Naive thymus-derived CD8-positive, alpha-beta T cell (primary cell): ENCODE measurements at regions of chr3 and their contacts with region 1.

Region 1: GRCh38 chr3:48478596-48479555 is 25.1 kb downstream of the SHISA5 start:
- DNase-seq: peak; percentile 35 to 88 (median 65)
- ATAC-seq: peak; percentile 88 to 89
- H3K4me3 Mint-ChIP-seq: peak overlapping the region; percentile 70 to 93 (median 88)
- H3K27ac Mint-ChIP-seq: peak overlapping the region; percentile 91 to 99 (median 97)
- H3K4me1 Mint-ChIP-seq: peaks cover 22 to 48% (median 43%) of the 10 kb centered on the region in 4 donors
- H3K27me3 Mint-ChIP-seq: no peaks in the 10 kb centered on the region

Region 2: GRCh38 chr3:48429317-48429959 is 49.4 kb before region 1 on chr3:
- POLR2A ChIA-PET with region 1: no interaction called
- DNase-seq: peak; percentile 31 to 82 (median 60)
- ATAC-seq: peak; percentile 73 to 80
- H3K4me3 Mint-ChIP-seq: peak overlapping the region in 9 of 10 donors; percentile 77 to 89 (median 84)
- H3K27ac Mint-ChIP-seq: peak overlapping the region in 4 of 10 donors; percentile 19 to 88 (median 68)
- H3K4me1 Mint-ChIP-seq: peaks cover 3 to 17% (median 12%) of the 10 kb centered on the region in 4 donors
- H3K27me3 Mint-ChIP-seq: peaks cover 0 to 2% (median 0%) of the 10 kb centered on the region in 5 donors

Region 3: DNA sequence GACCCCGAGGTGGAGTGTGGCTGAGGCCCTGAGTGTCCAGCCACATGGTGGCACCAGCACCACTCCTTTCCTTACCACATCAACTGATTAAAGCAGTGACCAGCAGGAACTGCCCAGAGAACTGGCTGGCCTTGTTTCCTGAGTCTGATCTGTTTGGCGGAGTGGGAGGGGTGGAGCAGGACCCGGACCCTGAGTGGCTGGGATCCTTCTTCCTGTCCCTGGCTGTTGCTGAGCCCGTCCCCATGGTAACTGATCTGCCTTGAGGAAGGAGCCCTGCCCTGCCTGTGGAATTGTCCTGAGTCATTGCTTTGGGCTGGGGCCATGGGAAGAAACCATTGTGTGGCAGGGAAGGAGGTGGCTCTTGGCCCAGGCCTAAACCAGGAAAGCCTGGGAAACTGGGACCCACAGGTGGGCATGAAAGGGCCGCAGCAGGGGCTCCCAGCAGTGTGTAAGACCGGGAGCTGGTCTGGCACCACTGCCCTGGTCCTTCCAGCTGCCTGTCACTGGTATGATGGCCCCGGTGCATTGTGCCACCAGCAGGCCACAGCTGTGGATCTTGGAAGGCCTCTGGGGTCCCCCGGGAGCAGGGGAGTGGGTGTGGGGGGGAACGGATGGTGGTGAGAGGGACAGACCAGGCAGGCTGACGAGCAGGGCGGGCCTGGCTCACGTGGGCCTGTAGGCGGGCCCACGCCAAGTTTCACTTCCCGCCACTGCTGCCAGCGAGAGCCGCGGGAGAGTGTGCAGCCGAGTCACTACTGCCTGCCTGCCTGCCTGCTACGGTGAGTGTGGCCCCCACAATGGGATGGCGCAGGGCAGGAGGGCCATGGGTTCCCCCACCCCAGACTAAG is 13.1 kb before region 1 on chr3:
- POLR2A ChIA-PET with region 1: interaction called, 33 read pairs
- DNase-seq: peak; percentile 63 to 82 (median 73)
- ATAC-seq: peak; percentile 97
- H3K4me3 Mint-ChIP-seq: peak overlapping the region; percentile 84 to 93 (median 90)
- H3K27ac Mint-ChIP-seq: peak overlapping the region; percentile 79 to 100 (median 96)
- H3K4me1 Mint-ChIP-seq: peaks cover 23 to 60% (median 59%) of the 10 kb centered on the region in 4 donors
- H3K27me3 Mint-ChIP-seq: no peaks in the 10 kb centered on the region

Region 4: DNA sequence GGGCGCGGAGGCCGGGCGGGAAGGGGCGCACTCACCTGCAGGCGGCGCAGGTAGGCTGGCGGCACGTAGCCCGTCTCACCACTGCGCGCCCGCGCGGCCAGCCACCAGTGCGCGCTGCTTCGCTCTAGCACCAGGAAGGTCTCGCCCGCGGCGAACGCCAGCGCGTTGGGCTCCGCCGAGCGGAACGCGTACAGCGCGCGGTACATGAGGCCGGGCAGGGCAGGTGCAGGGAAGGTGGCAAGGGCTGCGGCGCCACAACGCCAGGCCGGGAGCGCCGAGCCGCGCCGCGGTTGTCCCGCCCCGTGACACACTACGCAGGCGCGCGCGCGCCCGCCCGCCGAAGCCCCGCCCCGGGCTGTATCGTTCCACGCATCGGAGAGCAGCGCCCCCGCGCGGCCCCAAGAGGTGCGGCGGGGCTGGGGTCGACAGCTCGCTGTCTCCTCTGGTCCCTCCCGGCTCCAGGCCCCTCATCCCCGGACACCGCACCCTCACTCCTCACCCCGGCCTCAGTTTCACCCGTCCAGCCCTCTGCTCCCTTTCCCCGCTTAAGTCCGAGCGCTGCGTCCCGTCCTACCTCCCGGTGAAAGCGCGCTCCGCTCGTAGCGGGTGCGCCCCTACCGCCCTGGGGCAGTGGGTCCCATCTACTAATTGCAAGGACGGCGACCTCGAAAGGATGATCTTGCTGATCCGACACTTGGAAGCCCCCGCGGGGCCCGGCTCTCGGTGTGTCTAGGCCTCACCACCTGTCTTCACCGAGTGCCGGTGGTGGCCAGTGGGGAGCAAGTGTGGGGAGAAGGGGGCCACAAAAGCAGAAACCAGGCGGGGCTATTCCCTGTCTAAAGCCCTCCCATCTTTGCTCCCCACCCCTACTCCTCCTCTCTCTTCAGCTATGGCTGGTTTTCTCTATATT is 207.0 kb after region 1 on chr3 and contains the start of gene NCKIPSD:
- POLR2A ChIA-PET with region 1: no interaction called
- DNase-seq: peak; percentile 78 to 97 (median 92)
- ATAC-seq: peak; percentile 85 to 87
- H3K4me3 Mint-ChIP-seq: peak within 1 kb of the TSS; percentile 87 to 98 (median 93)
- H3K27ac Mint-ChIP-seq: peak within 1 kb of the TSS; percentile 71 to 94 (median 92)
- H3K4me1 Mint-ChIP-seq: peaks cover 21 to 39% (median 28%) of the 10 kb centered on the region in 4 donors
- H3K27me3 Mint-ChIP-seq: no peaks in the 10 kb centered on the region
- polyA plus RNA-seq, gene NCKIPSD: 8.1 to 14.2 (median 8.5) TPM

Region 5: GRCh38 chr3:48820612-48821324 is 341.9 kb after region 1 on chr3:
- POLR2A ChIA-PET with region 1: no interaction called
- DNase-seq: no peak
- ATAC-seq: no peak
- H3K4me3 Mint-ChIP-seq: no peak overlapping the region
- H3K27ac Mint-ChIP-seq: peak overlapping the region in 6 of 10 donors; percentile 1 to 64 (median 32)
- H3K4me1 Mint-ChIP-seq: peaks cover 23 to 55% (median 43%) of the 10 kb centered on the region in 4 donors
- H3K27me3 Mint-ChIP-seq: no peaks in the 10 kb centered on the region